Spleen (tissue), 13 donors: ENCODE measurements at regions of chr18 and their contacts with region 1.

Region 1: GRCh38 chr18:57881818-57882413 is 78.8 kb upstream of the ATP8B1 start:
- DNase-seq: peak; percentile 84
- H3K4me3 ChIP-seq: no peak overlapping the region
- H3K27ac ChIP-seq: no peak overlapping the region
- H3K4me1 ChIP-seq: peaks cover 0 to 7% (median 3%) of the 10 kb centered on the region in 6 donors
- H3K27me3 ChIP-seq: no peaks in the 10 kb centered on the region
- CTCF ChIP-seq: peak; percentile 60 to 89 (median 80)
- POLR2A ChIP-seq: no peak

Region 2: GRCh38 chr18:57533006-57533867 is 348.7 kb before region 1 on chr18:
- intact Hi-C with region 1: no loop called
- DNase-seq: no peak
- H3K4me3 ChIP-seq: no peak overlapping the region
- H3K27ac ChIP-seq: peak overlapping the region in 3 of 8 donors; percentile 12 to 21 (median 16)
- H3K4me1 ChIP-seq: no peaks in the 10 kb centered on the region
- H3K27me3 ChIP-seq: no peaks in the 10 kb centered on the region
- CTCF ChIP-seq: no peak
- POLR2A ChIP-seq: no peak

Region 3: GRCh38 chr18:57806978-57807285 is 75.0 kb before region 1 on chr18:
- intact Hi-C with region 1: no loop called
- DNase-seq: no peak
- H3K4me3 ChIP-seq: no peak overlapping the region
- H3K27ac ChIP-seq: peak overlapping the region in 7 of 8 donors; percentile 1 to 55 (median 30)
- H3K4me1 ChIP-seq: peaks cover 0 to 39% (median 25%) of the 10 kb centered on the region in 6 donors
- H3K27me3 ChIP-seq: peaks cover 0 to 32% (median 20%) of the 10 kb centered on the region in 7 donors
- CTCF ChIP-seq: no peak
- POLR2A ChIP-seq: no peak

Region 4: DNA sequence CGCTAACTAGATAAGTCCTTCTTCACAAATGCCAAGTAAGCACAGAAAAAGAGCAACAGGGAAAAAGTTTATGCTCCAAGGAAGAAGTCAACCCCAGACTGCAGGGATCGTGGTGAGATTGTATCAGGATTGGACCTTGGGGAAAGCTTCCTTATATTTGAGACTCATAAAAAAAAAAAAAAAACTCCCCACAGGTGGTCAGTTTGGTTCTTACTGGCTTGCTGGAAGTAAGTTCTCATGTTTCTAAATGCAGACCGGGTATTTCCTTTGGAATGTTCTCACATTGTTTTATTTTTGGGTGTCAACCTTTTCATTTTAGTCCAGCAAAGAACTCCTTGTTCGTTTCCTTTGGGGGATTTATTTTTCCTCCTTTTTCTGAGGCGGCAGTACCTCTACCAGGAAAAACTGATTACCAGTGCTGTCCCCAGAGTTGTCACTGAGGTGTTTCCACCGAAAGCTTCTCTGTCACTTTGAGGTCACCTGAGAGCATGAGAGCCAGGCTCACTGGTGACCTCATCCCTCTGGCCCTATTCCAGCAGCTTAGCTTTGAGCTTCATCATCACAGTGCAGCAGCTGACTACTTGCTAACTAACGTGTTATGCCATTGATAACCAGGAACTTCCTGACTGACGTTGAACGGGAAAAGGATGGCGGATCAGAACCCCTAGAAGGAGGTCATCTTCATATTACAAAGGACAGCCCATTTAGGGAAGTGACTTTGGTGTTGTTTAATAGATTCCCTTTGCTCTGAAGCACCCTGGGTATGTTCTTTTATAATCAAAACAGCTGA is 62.0 kb before region 1 on chr18:
- intact Hi-C with region 1: no loop called
- DNase-seq: no peak
- H3K4me3 ChIP-seq: no peak overlapping the region
- H3K27ac ChIP-seq: peak overlapping the region in 5 of 8 donors; percentile 9 to 62 (median 36)
- H3K4me1 ChIP-seq: no peaks in the 10 kb centered on the region
- H3K27me3 ChIP-seq: no peaks in the 10 kb centered on the region
- CTCF ChIP-seq: no peak
- POLR2A ChIP-seq: no peak

Region 5: DNA sequence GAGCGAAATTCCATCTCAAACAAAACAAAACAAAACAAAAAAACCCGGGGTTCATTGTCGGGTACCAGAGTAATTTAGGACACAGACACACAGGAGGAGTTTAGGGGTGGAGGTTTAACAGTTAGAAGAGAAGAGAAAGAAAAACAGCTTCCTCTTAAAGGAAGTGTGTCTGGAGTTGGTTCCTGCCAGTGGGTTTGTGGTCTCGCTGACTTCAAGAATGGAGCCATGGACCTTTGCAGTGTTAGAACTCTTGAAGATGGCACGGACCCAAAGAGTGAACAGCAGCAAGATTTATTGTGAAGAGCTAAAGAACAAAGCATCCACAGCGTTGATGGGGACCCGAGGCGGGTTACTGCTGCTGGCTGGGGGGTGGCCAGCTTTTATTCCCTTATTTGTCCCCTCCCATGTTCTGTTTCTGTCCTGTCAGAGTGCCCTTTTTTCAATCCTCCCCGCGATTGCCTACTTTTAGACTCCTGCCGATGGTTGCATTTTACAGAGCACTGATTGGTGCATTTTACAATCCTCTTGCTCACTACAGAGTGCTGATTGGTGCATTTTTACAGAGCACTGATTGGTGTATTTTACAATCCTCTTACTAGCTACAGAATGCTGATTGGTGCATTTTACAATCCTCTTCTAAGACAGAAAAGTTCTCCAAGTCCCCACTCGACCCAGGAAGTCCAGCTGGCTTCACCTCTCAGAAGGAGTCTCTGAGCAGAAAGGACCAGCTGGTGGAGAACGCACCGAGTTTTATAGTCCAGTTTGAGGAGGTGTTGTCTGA is 50.1 kb before region 1 on chr18:
- intact Hi-C with region 1: no loop called
- DNase-seq: no peak
- H3K4me3 ChIP-seq: no peak overlapping the region
- H3K27ac ChIP-seq: no peak overlapping the region
- H3K4me1 ChIP-seq: peaks cover 0 to 21% (median 9%) of the 10 kb centered on the region in 6 donors
- H3K27me3 ChIP-seq: no peaks in the 10 kb centered on the region
- CTCF ChIP-seq: no peak
- POLR2A ChIP-seq: no peak

Region 6: DNA sequence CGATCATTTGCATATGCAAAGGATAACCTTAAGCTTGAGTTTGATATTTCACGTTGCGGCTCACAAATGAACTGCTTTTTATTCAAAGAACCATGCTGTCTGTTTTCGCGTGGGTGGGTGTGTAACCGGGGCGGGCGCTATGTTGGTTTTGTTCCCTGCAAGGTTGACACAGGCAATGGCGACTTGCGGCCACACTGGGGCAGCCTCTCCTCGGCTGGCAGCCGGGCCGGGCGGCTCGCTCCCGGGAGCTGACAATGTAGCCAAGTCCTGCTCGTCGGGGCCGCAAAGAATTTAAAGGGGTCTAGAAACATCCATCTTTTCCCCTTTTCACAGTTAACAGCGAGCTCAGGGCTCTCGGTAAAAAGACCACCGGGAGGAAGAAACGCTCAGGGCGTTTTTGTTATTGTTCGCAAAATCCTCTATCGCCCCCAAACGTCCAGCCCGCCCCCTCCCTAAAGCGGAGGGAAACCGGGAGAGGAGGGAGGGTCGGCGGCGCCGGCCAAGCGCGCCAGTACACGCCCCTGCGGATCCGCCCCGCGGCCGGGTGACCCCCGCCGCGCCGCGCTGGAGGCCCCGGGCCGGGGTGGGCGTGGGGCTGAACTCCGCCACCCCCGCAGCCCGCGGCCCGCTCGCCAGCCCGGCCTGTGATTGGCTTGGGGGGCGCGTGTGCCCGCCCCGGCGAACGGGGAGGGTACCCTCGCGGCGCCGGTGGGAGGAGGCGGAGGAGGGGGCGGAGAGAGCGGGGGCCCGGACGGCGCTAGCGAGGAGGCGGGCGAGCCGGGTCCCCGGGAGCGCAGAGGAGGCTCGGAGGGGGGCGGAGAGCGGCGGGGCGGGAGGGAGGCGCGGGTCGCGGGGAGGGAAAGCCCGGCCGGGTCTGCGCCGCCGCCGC is 161.8 kb after region 1 on chr18 and contains the start of gene NEDD4L:
- intact Hi-C with region 1: loop called (anchors 10 kb)
- DNase-seq: peak; percentile 96
- H3K4me3 ChIP-seq: peak within 1 kb of the TSS; percentile 74 to 99 (median 95)
- H3K27ac ChIP-seq: peak within 1 kb of the TSS; percentile 66 to 92 (median 84)
- H3K4me1 ChIP-seq: peaks cover 5 to 56% (median 35%) of the 10 kb centered on the region in 6 donors
- H3K27me3 ChIP-seq: peaks cover 0 to 26% (median 0%) of the 10 kb centered on the region in 7 donors
- CTCF ChIP-seq: peak; percentile 51 to 88 (median 79)
- POLR2A ChIP-seq: no peak
- total RNA-seq, gene NEDD4L: 14.3 to 26.9 (median 24.9) TPM

Region 7: DNA sequence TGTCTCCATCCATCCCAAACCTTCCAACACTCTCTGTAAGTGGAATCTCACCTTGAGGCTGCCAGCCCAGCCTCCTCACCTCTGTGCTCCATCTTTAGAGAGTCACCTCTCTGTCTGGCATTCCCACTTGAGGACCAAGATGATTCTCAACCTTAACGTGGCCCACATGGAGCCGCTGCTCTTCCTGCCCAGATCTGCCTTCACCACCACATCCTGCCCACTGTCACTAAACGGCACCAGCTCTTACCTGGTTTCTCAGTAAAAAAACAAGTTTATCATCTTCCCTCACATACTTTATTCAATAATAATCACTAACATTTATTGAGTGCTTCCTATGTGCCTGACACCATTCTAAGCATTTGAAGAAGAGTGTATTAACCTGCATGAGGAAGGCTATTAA is 242.6 kb after region 1 on chr18:
- intact Hi-C with region 1: loop called (anchors 5 kb)
- DNase-seq: no peak
- H3K4me3 ChIP-seq: no peak overlapping the region
- H3K27ac ChIP-seq: no peak overlapping the region
- H3K4me1 ChIP-seq: peaks cover 0 to 6% (median 0%) of the 10 kb centered on the region in 6 donors
- H3K27me3 ChIP-seq: no peaks in the 10 kb centered on the region
- CTCF ChIP-seq: no peak
- POLR2A ChIP-seq: no peak